CD14-positive monocyte (primary cell): ENCODE measurements at regions of chr10 and their contacts with region 1.

Region 1: GRCh38 chr10:95693668-95694534 is at the start of gene TCTN3:
- DNase-seq: peak; percentile 99 to 100 (median 100)
- H3K4me3 ChIP-seq: peak within 1 kb of the TSS; percentile 88 to 97 (median 92)
- H3K4me3 Mint-ChIP-seq: peak within 1 kb of the TSS; percentile 97 to 99
- H3K27ac ChIP-seq: peak within 1 kb of the TSS; percentile 57 to 88
- H3K27ac Mint-ChIP-seq: peak within 1 kb of the TSS; percentile 86 to 98 (median 95)
- H3K4me1 ChIP-seq: peaks cover 40 to 45% of the 10 kb centered on the region in 2 donors
- H3K4me1 Mint-ChIP-seq: peaks cover 47% of the 10 kb centered on the region
- H3K27me3 ChIP-seq: no peaks in the 10 kb centered on the region
- H3K27me3 Mint-ChIP-seq: peaks cover 0 to 4% (median 0%) of the 10 kb centered on the region in 3 donors
- CTCF ChIP-seq: peak; percentile 99
- polyA plus RNA-seq, gene TCTN3: 8.5 to 23.1 (median 14.4) TPM

Region 2: DNA sequence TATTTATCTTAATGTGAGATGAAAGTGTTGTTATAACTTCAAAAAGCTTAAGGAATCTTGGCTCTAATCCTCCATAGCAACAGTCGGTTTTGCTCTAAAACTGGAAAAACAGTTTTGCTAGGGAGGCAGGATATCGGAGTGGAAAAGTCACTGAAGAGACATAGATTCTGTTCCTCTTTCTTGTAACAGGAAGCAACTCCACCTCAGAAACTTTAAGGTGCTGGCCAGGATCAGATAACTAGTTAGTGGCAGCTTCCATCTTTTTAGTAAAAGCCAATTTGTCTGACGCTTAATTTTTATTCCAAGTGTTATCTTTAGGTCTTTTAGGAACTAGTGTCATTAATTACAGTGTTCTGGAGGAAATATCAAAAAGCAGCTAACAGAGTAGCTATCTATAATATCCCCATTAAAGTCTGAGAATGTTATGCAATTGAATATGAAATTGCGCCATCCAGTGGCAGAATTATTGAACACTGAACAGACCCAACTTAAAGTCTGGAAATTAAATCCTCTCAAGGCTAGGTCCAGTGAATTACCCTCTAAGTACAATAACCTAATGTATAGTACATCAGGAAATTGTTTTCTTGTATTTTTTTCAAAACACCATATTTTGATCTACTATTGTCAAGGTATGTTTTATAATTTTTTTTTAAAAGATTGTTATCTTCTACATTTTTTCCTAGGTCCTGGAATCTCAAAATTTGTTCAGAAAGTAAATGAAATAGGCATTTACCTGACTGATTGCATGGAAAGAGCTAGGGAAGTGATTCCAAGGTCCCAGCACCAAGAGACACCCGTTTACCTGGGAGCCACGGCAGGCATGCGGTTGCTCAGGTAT is 148.0 kb after region 1 on chr10:
- intact Hi-C with region 1: loop called (anchors 2 kb)
- DNase-seq: peak; percentile 54 to 75 (median 71)
- H3K4me3 ChIP-seq: peak overlapping the region in 1 of 3 experiments; percentile 13
- H3K4me3 Mint-ChIP-seq: peak overlapping the region in 1 of 2 donors; percentile 66
- H3K27ac ChIP-seq: peak overlapping the region; percentile 21 to 81
- H3K27ac Mint-ChIP-seq: peak overlapping the region; percentile 80 to 87 (median 85)
- H3K4me1 ChIP-seq: peaks cover 41 to 47% of the 10 kb centered on the region in 2 donors
- H3K4me1 Mint-ChIP-seq: peaks cover 41% of the 10 kb centered on the region
- H3K27me3 ChIP-seq: no peaks in the 10 kb centered on the region
- H3K27me3 Mint-ChIP-seq: no peaks in the 10 kb centered on the region
- CTCF ChIP-seq: peak; percentile 92

Region 3: GRCh38 chr10:95935429-95935828 is 241.5 kb after region 1 on chr10:
- intact Hi-C with region 1: no loop called
- DNase-seq: no peak
- H3K4me3 ChIP-seq: no peak overlapping the region
- H3K4me3 Mint-ChIP-seq: no peak overlapping the region
- H3K27ac ChIP-seq: no peak overlapping the region
- H3K27ac Mint-ChIP-seq: no peak overlapping the region
- H3K4me1 ChIP-seq: no peaks in the 10 kb centered on the region
- H3K4me1 Mint-ChIP-seq: peaks cover 9% of the 10 kb centered on the region
- H3K27me3 ChIP-seq: no peaks in the 10 kb centered on the region
- H3K27me3 Mint-ChIP-seq: peaks cover 0 to 2% (median 0%) of the 10 kb centered on the region in 3 donors
- CTCF ChIP-seq: no peak

Region 4: GRCh38 chr10:96043033-96043932 is 349.4 kb after region 1 on chr10 and contains the start of gene CCNJ:
- intact Hi-C with region 1: loop called in 1 of 2 experiments (anchors 10 kb)
- DNase-seq: peak; percentile 72 to 83 (median 82)
- H3K4me3 ChIP-seq: peak within 1 kb of the TSS; percentile 56 to 91 (median 77)
- H3K4me3 Mint-ChIP-seq: peak within 1 kb of the TSS; percentile 95
- H3K27ac ChIP-seq: peak within 1 kb of the TSS; percentile 90 to 96
- H3K27ac Mint-ChIP-seq: peak within 1 kb of the TSS; percentile 91 to 97 (median 96)
- H3K4me1 ChIP-seq: peaks cover 26 to 42% of the 10 kb centered on the region in 2 donors
- H3K4me1 Mint-ChIP-seq: peaks cover 42% of the 10 kb centered on the region
- H3K27me3 ChIP-seq: no peaks in the 10 kb centered on the region
- H3K27me3 Mint-ChIP-seq: peaks cover 0 to 4% (median 1%) of the 10 kb centered on the region in 3 donors
- CTCF ChIP-seq: no peak
- polyA plus RNA-seq, gene CCNJ: 1.3 to 9.2 (median 2.5) TPM